ENCODE measurements at regions of chr1 and their contacts with region 1.

Region 1: GRCh38 chr1:32221980-32222755 is at the starts of genes EIF3I and TMEM234:
- DNase-seq: peak; percentile 96 to 97 (median 97)
- H3K4me3 ChIP-seq: peak within 1 kb of the TSS; percentile 65 to 97 (median 85)
- H3K27ac ChIP-seq: peak within 1 kb of the TSS; percentile 99 to 100
- H3K4me1 ChIP-seq: peaks cover 3 to 29% (median 22%) of the 10 kb centered on the region in 4 experiments
- H3K27me3 ChIP-seq: no peaks in the 10 kb centered on the region

Region 2: GRCh38 chr1:32205401-32206370 is 16.5 kb before region 1 on chr1 and contains the start of gene IQCC:
- CTCF ChIA-PET with region 1: interaction called, 48 read pairs
- POLR2A ChIA-PET with region 1: interaction called, 3 read pairs
- DNase-seq: peak; percentile 81 to 88 (median 87)
- H3K4me3 ChIP-seq: peak within 1 kb of the TSS; percentile 50 to 87 (median 82)
- H3K27ac ChIP-seq: peak within 1 kb of the TSS; percentile 54 to 78
- H3K4me1 ChIP-seq: peaks cover 3 to 36% (median 33%) of the 10 kb centered on the region in 4 experiments
- H3K27me3 ChIP-seq: no peaks in the 10 kb centered on the region

Region 3: DNA sequence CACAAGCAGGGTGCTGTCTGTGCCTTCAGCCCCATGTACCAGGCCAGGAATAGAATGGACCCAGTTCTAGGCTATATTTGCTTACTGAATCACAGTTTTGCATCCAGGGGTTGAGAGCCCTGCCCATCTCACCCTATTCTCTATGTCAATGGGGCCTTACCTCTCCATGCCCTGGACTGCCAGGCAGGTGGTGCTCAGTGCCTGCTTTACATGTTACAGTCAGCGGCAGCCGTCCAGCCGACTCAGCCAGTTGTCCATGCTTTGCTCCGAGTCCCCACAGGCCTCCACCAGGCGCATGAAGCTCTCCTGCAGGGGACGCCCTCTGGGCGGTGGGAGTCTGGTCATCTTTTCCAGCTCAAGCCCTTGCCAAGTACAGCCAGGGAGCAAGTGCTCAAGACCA is 12.6 kb after region 1 on chr1:
- CTCF ChIA-PET with region 1: interaction called, 50 read pairs
- POLR2A ChIA-PET with region 1: interaction called, 6 read pairs
- DNase-seq: no peak
- H3K4me3 ChIP-seq: no peak overlapping the region
- H3K27ac ChIP-seq: no peak overlapping the region
- H3K4me1 ChIP-seq: peaks cover 0 to under 1% (median under 1%) of the 10 kb centered on the region in 4 experiments
- H3K27me3 ChIP-seq: peaks cover 0 to 2% (median 0%) of the 10 kb centered on the region in 5 experiments

Region 4: GRCh38 chr1:32702599-32703478 is 480.7 kb after region 1 on chr1 and contains the start of gene SYNC:
- CTCF ChIA-PET with region 1: no interaction called
- POLR2A ChIA-PET with region 1: no interaction called
- DNase-seq: peak in 2 of 3 donors; percentile 16 to 31
- H3K4me3 ChIP-seq: peak within 1 kb of the TSS; percentile 24 to 81 (median 63)
- H3K27ac ChIP-seq: no peak within 1 kb of the TSS
- H3K4me1 ChIP-seq: peaks cover 0 to 26% (median 21%) of the 10 kb centered on the region in 4 experiments
- H3K27me3 ChIP-seq: peaks cover 0 to 14% (median 4%) of the 10 kb centered on the region in 5 experiments